ENCODE measurements at regions of chr18 and their contacts with region 1.

Region 1: GRCh38 chr18:22933206-22933957 is at the start of gene RBBP8:
- DNase-seq: peak; percentile 87
- H3K4me3 Mint-ChIP-seq: peak within 1 kb of the TSS; percentile 81
- H3K27ac Mint-ChIP-seq: peak within 1 kb of the TSS; percentile 85
- H3K4me1 Mint-ChIP-seq: peaks cover 9% of the 10 kb centered on the region
- H3K27me3 Mint-ChIP-seq: no peaks in the 10 kb centered on the region
- CTCF ChIP-seq: no peak
- total RNA-seq, gene RBBP8: 55.6 and 62.4 TPM in 2 replicates

Region 2: GRCh38 chr18:22710628-22711380 is 222.6 kb before region 1 on chr18:
- CTCF ChIA-PET with region 1: no interaction called
- intact Hi-C with region 1: no loop called
- DNase-seq: peak; percentile 60
- H3K4me3 Mint-ChIP-seq: peak overlapping the region; percentile 74
- H3K27ac Mint-ChIP-seq: peak overlapping the region; percentile 70
- H3K4me1 Mint-ChIP-seq: peaks cover 43% of the 10 kb centered on the region
- H3K27me3 Mint-ChIP-seq: no peaks in the 10 kb centered on the region
- CTCF ChIP-seq: no peak

Region 3: GRCh38 chr18:22846088-22846683 is 87.2 kb before region 1 on chr18:
- CTCF ChIA-PET with region 1: interaction called, 4 read pairs
- intact Hi-C with region 1: loop called (anchors 5 kb)
- DNase-seq: no peak
- H3K4me3 Mint-ChIP-seq: no peak overlapping the region
- H3K27ac Mint-ChIP-seq: no peak overlapping the region
- H3K4me1 Mint-ChIP-seq: peaks cover 30% of the 10 kb centered on the region
- H3K27me3 Mint-ChIP-seq: no peaks in the 10 kb centered on the region
- CTCF ChIP-seq: peak; percentile 31

Region 4: GRCh38 chr18:22865354-22866116 is 67.8 kb before region 1 on chr18:
- CTCF ChIA-PET with region 1: no interaction called
- intact Hi-C with region 1: loop called (anchors 5 kb)
- DNase-seq: peak; percentile 16
- H3K4me3 Mint-ChIP-seq: peak overlapping the region; percentile 54
- H3K27ac Mint-ChIP-seq: peak overlapping the region; percentile 11
- H3K4me1 Mint-ChIP-seq: peaks cover 23% of the 10 kb centered on the region
- H3K27me3 Mint-ChIP-seq: no peaks in the 10 kb centered on the region
- CTCF ChIP-seq: no peak

Region 5: DNA sequence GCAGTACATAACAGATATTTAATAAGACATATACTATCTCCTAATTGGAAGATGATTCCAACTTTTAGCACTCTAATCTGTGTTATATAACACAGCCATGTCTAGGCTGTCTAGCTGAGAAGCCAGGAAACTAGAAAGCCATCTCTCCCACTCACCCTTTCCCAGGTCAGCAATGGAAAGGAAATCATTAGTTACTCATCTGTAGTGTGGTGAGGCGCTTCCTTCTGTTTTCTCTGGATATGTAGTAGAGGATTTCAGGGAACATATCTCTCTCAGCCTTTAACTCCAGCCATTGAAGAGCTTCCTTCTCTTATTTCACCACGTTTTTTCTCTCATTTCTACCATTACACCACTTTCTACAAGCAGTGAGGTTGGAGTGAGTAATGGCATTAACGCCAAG is 19.1 kb after region 1 on chr18:
- CTCF ChIA-PET with region 1: no interaction called
- intact Hi-C with region 1: no loop called
- DNase-seq: no peak
- H3K4me3 Mint-ChIP-seq: no peak overlapping the region
- H3K27ac Mint-ChIP-seq: no peak overlapping the region
- H3K4me1 Mint-ChIP-seq: no peaks in the 10 kb centered on the region
- H3K27me3 Mint-ChIP-seq: no peaks in the 10 kb centered on the region
- CTCF ChIP-seq: no peak

Region 6: GRCh38 chr18:22977847-22978701 is 44.7 kb after region 1 on chr18:
- CTCF ChIA-PET with region 1: interaction called, 11 read pairs
- intact Hi-C with region 1: loop called (anchors 5 kb)
- DNase-seq: peak; percentile 30
- H3K4me3 Mint-ChIP-seq: peak overlapping the region; percentile 45
- H3K27ac Mint-ChIP-seq: peak overlapping the region; percentile 89
- H3K4me1 Mint-ChIP-seq: peaks cover 60% of the 10 kb centered on the region
- H3K27me3 Mint-ChIP-seq: no peaks in the 10 kb centered on the region
- CTCF ChIP-seq: no peak

Region 7: DNA sequence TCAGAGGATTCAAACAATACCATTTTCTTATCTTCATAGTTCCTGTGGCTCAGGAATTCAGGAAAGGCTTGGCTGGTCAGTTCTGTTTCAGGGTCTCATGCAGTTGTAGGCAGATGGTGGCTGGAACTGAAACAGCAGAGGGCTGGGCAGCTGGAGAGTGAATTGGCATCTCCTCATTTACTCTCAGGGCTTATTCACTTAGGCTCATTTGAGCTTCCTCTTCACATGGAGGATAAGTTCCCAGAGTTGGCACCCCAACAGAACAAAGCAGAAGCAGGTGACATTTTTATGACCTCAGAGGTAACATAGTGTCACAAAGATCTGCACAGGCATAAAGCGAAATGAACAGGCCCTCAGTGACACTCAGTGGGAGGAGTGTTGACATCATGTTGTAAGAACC is 65.8 kb after region 1 on chr18:
- CTCF ChIA-PET with region 1: no interaction called
- intact Hi-C with region 1: no loop called
- DNase-seq: no peak
- H3K4me3 Mint-ChIP-seq: no peak overlapping the region
- H3K27ac Mint-ChIP-seq: peak overlapping the region; percentile 54
- H3K4me1 Mint-ChIP-seq: no peaks in the 10 kb centered on the region
- H3K27me3 Mint-ChIP-seq: no peaks in the 10 kb centered on the region
- CTCF ChIP-seq: no peak

Measured in Calu3 (cell line).